Activated CD8-positive, alpha-beta T cell treated with anti-CD3 and anti-CD28 coated beads, Interleukin-2, amount 10 ng/mL, durations not matched to agents 7 days and 5 days (primary cell): ENCODE measurements at regions of chr2 and their contacts with region 1.

Region 1: DNA sequence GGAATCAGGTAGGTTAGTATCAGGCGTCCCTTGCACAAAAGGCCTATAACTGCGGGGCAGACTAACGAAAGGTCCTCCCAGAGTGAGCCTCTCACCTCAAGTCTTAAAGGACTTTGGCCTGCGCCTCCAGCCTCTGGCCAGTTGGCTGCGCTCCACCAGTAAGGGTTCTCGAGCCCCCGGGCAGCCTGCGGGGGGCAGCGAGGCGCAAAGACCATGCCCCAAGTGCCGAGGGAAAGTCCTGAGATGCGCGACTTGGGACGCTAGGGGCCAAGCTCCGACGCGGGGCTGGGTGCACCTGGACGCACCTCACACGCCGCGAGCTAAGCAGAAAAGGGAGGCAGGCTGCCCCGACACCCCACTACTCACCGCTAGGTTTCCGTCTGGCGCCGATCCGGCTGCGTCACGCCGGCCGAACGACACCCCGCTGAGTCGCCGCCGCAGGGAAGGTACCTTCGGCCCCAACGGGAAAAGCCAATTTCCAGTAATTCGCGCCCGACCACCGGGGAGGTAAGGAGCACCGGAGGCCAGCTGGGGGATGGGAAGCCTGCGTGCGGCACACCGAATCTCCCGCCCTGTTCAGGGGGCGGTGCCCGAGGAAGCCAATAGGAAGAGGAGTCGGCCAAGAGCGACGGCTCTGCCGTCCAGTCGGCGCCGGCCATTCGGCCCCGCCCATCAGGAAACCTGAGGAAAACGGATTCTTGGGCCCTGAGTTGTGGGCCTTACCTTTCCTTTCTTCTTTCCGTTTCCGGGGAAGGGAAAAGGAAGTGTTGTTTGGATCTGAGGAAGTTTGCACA is at the start of gene ORC2:
- DNase-seq: peak; percentile 94
- ATAC-seq: peak; percentile 97
- H3K4me3 Mint-ChIP-seq: peak within 1 kb of the TSS; percentile 93
- H3K27ac Mint-ChIP-seq: peak within 1 kb of the TSS; percentile 97
- H3K4me1 Mint-ChIP-seq: peaks cover 63% of the 10 kb centered on the region
- H3K27me3 Mint-ChIP-seq: no peaks in the 10 kb centered on the region
- total RNA-seq, gene ORC2: 47.4 to 57.2 TPM

Region 2: GRCh38 chr2:200728630-200729029 is 234.7 kb before region 1 on chr2:
- CTCF ChIA-PET with region 1: no interaction called
- POLR2A ChIA-PET with region 1: no interaction called
- DNase-seq: no peak
- ATAC-seq: no peak
- H3K4me3 Mint-ChIP-seq: no peak overlapping the region
- H3K27ac Mint-ChIP-seq: no peak overlapping the region
- H3K4me1 Mint-ChIP-seq: peaks cover 10% of the 10 kb centered on the region
- H3K27me3 Mint-ChIP-seq: peaks cover 21% of the 10 kb centered on the region

Region 3: GRCh38 chr2:200975672-200976071 is 12.4 kb after region 1 on chr2:
- CTCF ChIA-PET with region 1: interaction called, 79 read pairs
- POLR2A ChIA-PET with region 1: interaction called, 3 read pairs
- DNase-seq: no peak
- ATAC-seq: no peak
- H3K4me3 Mint-ChIP-seq: no peak overlapping the region
- H3K27ac Mint-ChIP-seq: no peak overlapping the region
- H3K4me1 Mint-ChIP-seq: no peaks in the 10 kb centered on the region
- H3K27me3 Mint-ChIP-seq: no peaks in the 10 kb centered on the region

Region 4: DNA sequence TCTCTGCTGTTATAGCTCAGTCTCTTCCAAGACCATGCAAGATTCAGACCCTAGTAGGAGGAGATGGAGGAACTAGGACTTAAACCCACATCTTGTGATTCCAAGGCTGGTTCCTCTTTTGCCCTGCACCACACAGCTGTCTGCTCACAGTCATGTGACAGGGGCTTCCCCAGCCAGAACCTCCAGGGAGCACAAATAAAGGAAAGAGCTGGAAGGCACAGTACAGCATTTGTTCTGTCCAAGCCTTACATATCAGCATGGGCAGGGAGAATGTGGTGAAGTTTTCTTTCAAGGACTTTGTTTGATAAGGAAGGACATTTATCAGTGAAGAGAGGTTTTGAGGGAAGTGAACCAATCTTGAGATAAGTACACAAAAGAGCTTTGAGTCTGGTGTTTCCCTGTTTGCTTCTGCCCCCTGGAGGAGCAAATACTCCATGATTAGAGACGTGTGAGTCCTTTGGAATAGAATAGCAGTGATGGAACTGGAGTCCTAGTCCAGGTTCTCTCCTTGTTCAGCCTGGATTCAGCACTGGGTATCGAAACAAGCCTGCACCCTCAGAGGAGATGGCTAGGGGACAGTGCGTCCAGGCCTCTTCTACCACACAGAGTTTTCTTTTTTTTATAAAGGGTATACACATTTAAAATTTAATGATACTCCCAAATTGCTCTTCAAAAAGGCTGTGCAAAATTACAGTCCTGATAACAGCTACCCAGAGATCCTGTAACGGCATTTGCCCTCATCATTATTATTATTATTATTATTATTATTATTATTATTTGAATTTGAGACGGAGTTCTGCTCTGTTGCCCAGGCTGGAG is 195.0 kb after region 1 on chr2:
- CTCF ChIA-PET with region 1: interaction called, 18 read pairs
- POLR2A ChIA-PET with region 1: no interaction called
- DNase-seq: peak; percentile 80
- ATAC-seq: peak; percentile 90
- H3K4me3 Mint-ChIP-seq: no peak overlapping the region
- H3K27ac Mint-ChIP-seq: peak overlapping the region; percentile 76
- H3K4me1 Mint-ChIP-seq: peaks cover 11% of the 10 kb centered on the region
- H3K27me3 Mint-ChIP-seq: no peaks in the 10 kb centered on the region

Region 5: GRCh38 chr2:201176081-201176481 is 212.8 kb after region 1 on chr2:
- CTCF ChIA-PET with region 1: interaction called, 16 read pairs
- POLR2A ChIA-PET with region 1: no interaction called
- DNase-seq: no peak
- ATAC-seq: no peak
- H3K4me3 Mint-ChIP-seq: no peak overlapping the region
- H3K27ac Mint-ChIP-seq: no peak overlapping the region
- H3K4me1 Mint-ChIP-seq: peaks cover 36% of the 10 kb centered on the region
- H3K27me3 Mint-ChIP-seq: no peaks in the 10 kb centered on the region

Region 6: GRCh38 chr2:201242571-201243277 is 279.4 kb after region 1 on chr2:
- CTCF ChIA-PET with region 1: no interaction called
- POLR2A ChIA-PET with region 1: no interaction called
- DNase-seq: no peak
- ATAC-seq: no peak
- H3K4me3 Mint-ChIP-seq: no peak overlapping the region
- H3K27ac Mint-ChIP-seq: peak overlapping the region; percentile 52
- H3K4me1 Mint-ChIP-seq: peaks cover 20% of the 10 kb centered on the region
- H3K27me3 Mint-ChIP-seq: no peaks in the 10 kb centered on the region